Activated CD8-positive, alpha-beta T cell treated with anti-CD3 and anti-CD28 coated beads for 36 hours (primary cell): ENCODE measurements at regions of chr19 and their contacts with region 1.

Region 1: DNA sequence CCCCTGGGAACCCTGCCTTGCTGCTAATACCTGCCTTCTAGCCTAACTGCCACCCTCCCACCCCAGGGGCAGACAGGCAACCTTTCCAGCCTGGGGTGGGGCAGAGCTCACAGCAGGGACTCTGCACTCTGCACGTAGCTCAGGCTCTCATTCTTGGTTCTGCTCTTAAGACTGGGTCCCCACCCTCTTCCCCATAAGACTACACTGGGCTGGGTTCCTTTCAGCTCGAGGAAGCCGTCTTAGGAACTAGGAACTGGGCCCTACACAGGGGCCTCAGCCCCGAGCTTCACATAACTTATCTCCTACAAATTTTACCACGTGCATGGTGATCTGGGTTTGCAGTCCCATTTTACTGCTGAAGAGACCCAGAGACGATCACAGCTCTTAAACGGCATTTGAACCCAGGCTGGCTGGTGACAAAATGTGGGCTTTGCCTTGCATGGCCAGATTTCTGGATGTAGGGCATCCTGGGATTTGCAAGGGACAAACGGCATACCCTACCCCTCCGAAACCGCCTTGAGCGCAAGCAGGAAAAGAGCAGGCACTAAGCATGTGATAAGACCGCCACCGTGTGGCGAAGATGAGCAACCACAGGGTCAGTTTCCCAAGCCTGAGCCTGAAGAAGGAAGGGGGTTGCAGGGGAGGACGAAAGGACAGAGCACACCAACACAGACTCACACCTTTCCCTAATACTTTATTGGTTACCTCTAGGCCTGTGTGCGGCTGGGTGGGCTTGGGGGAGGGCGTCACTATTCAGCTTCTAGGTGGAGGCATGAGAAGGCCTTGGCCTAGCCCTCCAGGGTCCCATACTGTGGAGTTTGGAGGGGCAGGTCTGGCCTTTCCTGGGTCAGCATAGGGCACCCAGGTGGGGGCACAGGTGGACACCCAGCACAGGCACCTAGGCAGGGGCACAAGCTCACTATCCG is 5.1 kb downstream of the JUNB start:
- DNase-seq: peak; percentile 80
- ATAC-seq: peak; percentile 15
- H3K4me3 Mint-ChIP-seq: peak overlapping the region; percentile 68
- H3K27ac Mint-ChIP-seq: peak overlapping the region; percentile 87
- H3K4me1 Mint-ChIP-seq: peaks cover 34% of the 10 kb centered on the region
- H3K27me3 Mint-ChIP-seq: no peaks in the 10 kb centered on the region
- CTCF ChIP-seq: peak; percentile 93

Region 2: GRCh38 chr19:12722566-12723380 is 73.6 kb before region 1 on chr19:
- CTCF ChIA-PET with region 1: interaction called, 10 read pairs
- POLR2A ChIA-PET with region 1: interaction called, 11 read pairs
- intact Hi-C with region 1: no loop called
- DNase-seq: peak; percentile 98
- ATAC-seq: peak; percentile 82
- H3K4me3 Mint-ChIP-seq: peak overlapping the region; percentile 96
- H3K27ac Mint-ChIP-seq: peak overlapping the region; percentile 91
- H3K4me1 Mint-ChIP-seq: peaks cover 29% of the 10 kb centered on the region
- H3K27me3 Mint-ChIP-seq: no peaks in the 10 kb centered on the region
- CTCF ChIP-seq: no peak

Region 3: DNA sequence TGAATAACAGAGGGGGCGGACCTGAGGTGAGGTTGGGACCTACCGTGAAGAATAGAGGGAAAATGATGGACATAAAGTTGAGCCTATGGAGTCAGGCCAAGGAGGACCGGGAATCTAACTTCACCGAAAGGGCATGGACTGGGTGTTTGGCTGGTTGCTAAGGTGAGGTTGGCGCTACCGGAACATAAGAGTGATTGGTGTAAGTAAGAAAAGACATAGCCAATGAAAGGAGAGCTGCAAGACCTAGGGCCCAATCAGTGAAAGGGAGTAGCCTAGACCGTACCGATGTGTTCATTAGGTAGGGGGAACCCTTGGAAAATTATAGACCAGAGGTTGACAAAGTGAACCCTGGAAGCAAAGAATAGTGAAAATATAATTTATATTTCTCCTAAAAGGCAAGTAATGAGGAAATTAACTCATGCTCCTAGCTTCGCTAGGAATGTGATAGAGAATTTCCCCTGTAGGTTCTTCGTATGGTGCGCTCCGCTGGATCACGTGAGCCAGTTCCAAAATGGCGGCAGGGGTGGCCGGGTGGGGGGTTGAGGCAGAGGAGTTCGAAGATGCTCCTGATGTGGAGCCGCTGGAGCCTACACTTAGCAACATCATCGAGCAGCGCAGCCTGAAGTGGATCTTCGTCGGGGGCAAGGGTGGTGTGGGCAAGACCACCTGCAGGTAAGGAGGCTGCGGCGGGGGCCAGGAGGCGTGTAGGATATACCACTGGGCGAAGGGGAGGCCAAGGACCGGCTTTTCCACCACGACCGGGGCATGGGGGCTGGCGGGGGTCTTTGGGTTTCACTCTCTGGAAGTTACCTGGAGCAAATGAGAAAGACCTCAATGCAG is 59.2 kb before region 1 on chr19 and contains the start of gene GET3:
- CTCF ChIA-PET with region 1: interaction called, 16 read pairs
- POLR2A ChIA-PET with region 1: interaction called, 18 read pairs
- intact Hi-C with region 1: no loop called
- DNase-seq: peak; percentile 89
- ATAC-seq: peak; percentile 84
- H3K4me3 Mint-ChIP-seq: peak within 1 kb of the TSS; percentile 99
- H3K27ac Mint-ChIP-seq: peak within 1 kb of the TSS; percentile 98
- H3K4me1 Mint-ChIP-seq: peaks cover 35% of the 10 kb centered on the region
- H3K27me3 Mint-ChIP-seq: no peaks in the 10 kb centered on the region
- CTCF ChIP-seq: no peak
- total RNA-seq, gene GET3: 50.7 to 52.2 TPM

Region 4: DNA sequence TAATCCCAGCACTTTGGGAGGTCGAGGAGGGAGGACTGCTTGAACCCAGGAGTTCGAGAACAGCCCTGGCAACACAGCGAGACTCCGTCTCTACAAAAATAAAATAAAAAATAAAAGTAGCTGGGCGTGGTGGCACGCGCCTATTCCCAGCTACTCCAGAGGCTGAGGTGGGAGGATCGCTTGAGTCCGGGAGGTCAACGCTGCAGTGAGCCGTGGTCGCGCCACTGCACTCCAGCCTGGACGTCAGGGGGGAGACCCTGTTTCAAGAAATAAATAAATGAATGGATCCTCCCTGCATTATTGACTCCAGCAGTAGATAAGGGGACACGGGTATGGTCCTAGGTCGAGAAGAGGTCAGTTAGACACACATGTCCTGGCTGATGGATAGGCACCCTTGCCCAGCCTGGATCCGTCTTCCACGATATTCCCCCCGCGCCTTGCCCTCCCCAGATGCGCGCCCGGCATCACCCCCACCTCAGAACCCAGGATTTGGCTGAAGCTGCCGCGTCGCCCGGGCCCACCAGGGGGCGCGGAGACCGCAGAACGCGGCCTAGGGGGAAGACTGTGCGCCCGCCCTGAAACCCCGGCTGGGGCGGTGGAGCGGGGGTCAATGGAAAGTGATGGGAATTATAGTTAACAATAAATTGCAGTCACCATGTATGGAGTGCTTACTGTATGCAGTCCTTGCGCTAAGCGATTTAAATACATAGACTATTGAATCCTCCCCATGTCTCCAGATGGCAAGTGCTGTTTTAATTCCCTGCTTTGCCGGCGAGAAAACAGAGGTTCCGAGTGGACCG is 19.0 kb before region 1 on chr19:
- CTCF ChIA-PET with region 1: interaction called, 326 read pairs
- POLR2A ChIA-PET with region 1: interaction called, 97 read pairs
- intact Hi-C with region 1: loop called (anchors 2 kb)
- DNase-seq: peak; percentile 85
- ATAC-seq: peak; percentile 32
- H3K4me3 Mint-ChIP-seq: peak overlapping the region; percentile 85
- H3K27ac Mint-ChIP-seq: peak overlapping the region; percentile 92
- H3K4me1 Mint-ChIP-seq: peaks cover 45% of the 10 kb centered on the region
- H3K27me3 Mint-ChIP-seq: no peaks in the 10 kb centered on the region
- CTCF ChIP-seq: peak; percentile 99

Region 5: DNA sequence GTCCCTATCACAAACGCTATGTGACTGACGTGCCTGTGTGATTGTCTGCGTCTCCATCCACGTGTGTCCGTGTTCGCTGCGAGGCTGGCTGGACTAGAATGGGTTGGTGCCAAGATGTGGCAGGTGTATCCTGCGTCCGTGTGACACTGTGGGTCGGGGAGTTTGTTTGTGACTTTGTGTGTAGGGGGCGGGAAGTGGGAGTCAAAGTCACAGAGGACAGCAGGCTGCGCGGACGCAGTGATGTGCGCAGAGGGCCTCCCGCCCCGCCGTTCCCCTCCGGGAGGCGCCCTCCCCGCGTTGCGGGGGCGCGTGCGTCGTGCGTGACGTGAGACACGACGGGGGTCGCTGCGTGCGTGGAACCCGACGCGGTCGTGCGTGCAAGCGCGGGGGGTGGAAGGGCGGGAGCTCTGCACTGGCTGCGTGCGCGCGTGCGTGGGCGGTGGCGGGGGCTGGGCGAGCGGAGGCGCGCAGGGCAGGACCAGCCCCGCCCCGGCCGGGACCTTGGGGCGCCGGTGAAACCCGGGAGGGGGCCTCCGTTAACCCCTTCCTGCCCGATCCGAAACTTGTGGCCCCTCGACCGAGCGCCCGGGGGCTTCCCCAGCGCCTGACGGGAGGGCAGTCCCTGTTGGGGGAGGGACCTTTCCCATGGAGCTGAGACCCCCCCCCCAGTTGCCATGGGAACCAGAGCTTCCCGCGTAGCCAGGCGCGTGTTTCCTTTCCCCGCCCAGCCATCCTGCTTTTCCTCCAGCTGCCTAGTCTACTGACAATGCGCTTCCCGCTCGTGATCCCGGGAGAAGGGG is 14.0 kb before region 1 on chr19:
- CTCF ChIA-PET with region 1: interaction called, 326 read pairs
- POLR2A ChIA-PET with region 1: interaction called, 97 read pairs
- intact Hi-C with region 1: loop called (anchors 2 kb)
- DNase-seq: peak; percentile 93
- ATAC-seq: peak; percentile 43
- H3K4me3 Mint-ChIP-seq: peak overlapping the region; percentile 75
- H3K27ac Mint-ChIP-seq: no peak overlapping the region
- H3K4me1 Mint-ChIP-seq: peaks cover 33% of the 10 kb centered on the region
- H3K27me3 Mint-ChIP-seq: no peaks in the 10 kb centered on the region
- CTCF ChIP-seq: no peak

Region 6: GRCh38 chr19:12806239-12807081 is 10.1 kb after region 1 on chr19 and contains the start of gene RNASEH2A:
- CTCF ChIA-PET with region 1: interaction called, 20 read pairs
- POLR2A ChIA-PET with region 1: interaction called, 8 read pairs
- intact Hi-C with region 1: no loop called
- DNase-seq: peak; percentile 93
- ATAC-seq: peak; percentile 91
- H3K4me3 Mint-ChIP-seq: peak within 1 kb of the TSS; percentile 86
- H3K27ac Mint-ChIP-seq: peak within 1 kb of the TSS; percentile 89
- H3K4me1 Mint-ChIP-seq: peaks cover 18% of the 10 kb centered on the region
- H3K27me3 Mint-ChIP-seq: peaks cover 2% of the 10 kb centered on the region
- CTCF ChIP-seq: no peak
- total RNA-seq, gene RNASEH2A: 40.3 to 44.1 TPM

Region 7: DNA sequence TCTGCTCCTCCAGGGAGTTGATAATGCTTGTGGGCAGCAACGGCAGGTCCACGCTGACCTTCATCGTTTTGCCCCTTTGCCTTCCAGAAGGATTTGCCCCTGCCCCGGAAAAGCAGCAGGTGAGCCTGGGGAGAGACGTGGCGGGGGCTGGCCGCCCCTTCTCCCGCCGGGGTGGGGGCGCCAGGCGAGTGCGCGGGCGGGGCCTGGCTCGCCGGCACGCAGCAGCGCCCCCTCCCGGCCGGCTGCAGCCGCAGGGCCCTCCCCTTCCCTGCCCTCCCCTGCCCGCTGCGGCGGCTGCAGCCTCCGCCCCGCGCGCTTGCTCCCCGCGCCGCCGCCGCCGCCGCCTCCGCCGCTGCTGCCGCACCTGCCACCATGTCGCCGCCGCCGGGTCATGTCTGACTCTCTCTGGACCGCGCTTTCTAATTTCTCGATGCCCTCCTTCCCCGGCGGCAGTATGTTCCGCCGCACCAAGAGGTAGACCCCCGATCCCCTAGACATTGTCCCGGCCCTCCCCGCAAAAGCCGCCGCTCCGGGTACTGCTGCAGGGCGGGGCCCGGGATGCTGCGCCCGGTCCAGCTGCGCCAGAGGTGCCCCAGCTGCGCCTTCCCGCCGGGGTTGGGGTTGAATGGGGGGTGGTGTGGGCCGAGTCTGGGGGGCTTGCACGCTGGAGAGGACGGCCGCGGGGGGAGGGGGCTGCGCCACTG is 41.9 kb after region 1 on chr19 and contains the start of gene MAST1:
- CTCF ChIA-PET with region 1: interaction called, 11 read pairs
- POLR2A ChIA-PET with region 1: no interaction called
- intact Hi-C with region 1: no loop called
- DNase-seq: peak; percentile 65
- ATAC-seq: peak; percentile 62
- H3K4me3 Mint-ChIP-seq: peak within 1 kb of the TSS; percentile 57
- H3K27ac Mint-ChIP-seq: no peak within 1 kb of the TSS
- H3K4me1 Mint-ChIP-seq: peaks cover 36% of the 10 kb centered on the region
- H3K27me3 Mint-ChIP-seq: peaks cover 76% of the 10 kb centered on the region
- CTCF ChIP-seq: peak; percentile 62
- total RNA-seq, gene MAST1: 2.4 to 3.0 TPM

Region 8: DNA sequence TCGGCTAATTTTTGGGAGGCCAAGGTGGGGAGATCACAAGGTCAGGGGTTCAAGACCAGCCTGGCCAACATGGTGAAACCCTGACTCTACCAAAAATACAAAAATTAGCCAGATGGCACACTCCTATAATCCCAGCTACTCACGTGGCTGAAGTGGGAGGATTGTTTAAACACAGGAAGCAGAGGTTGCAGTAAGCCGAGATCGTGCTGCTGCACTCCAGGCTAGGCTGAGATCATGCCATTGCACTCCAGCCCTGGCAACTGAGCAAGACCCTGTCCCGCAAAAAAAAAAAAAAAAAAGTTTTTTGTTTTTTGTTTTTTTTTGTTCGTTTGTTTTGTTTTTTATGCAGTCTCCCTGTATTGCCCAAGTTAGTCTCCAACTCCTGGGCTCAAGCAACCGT is 63.1 kb after region 1 on chr19:
- CTCF ChIA-PET with region 1: no interaction called
- POLR2A ChIA-PET with region 1: no interaction called
- intact Hi-C with region 1: no loop called
- DNase-seq: no peak
- ATAC-seq: no peak
- H3K4me3 Mint-ChIP-seq: no peak overlapping the region
- H3K27ac Mint-ChIP-seq: no peak overlapping the region
- H3K4me1 Mint-ChIP-seq: no peaks in the 10 kb centered on the region
- H3K27me3 Mint-ChIP-seq: no peaks in the 10 kb centered on the region
- CTCF ChIP-seq: no peak